CD8-positive, alpha-beta memory T cell (primary cell): ENCODE measurements at regions of chr15 and their contacts with region 1.

Region 1: DNA sequence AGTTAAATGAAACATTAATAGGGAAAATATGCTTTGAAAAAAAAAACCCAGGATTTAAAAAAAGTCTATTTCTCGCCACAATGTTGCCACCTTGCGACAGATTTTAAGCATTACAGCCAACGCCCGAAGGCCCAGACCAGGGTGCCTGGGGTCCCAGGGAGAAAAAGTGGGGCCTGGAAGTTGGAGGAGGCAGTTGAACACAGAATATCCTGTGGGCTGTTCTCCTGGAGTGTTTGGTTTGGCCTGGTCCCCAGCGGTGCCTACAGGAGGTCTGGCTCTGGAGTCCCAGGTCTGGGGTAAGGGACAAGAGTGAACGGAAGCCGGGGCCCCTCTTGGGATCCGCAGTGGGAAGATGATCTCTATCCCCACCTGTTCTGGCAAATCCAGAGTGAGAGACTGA is 3.4 kb downstream of the RNU6-1 start:
- DNase-seq: peak in 4 of 5 donors; percentile 44 to 72 (median 53)
- H3K4me3 ChIP-seq: peak overlapping the region; percentile 54
- H3K4me3 Mint-ChIP-seq: peak overlapping the region; percentile 84 to 93 (median 87)
- H3K27ac ChIP-seq: no peak overlapping the region
- H3K27ac Mint-ChIP-seq: peak overlapping the region in 3 of 8 donors; percentile 29 to 87 (median 38)
- H3K4me1 ChIP-seq: peaks cover 46% of the 10 kb centered on the region
- H3K4me1 Mint-ChIP-seq: peaks cover 49 to 73% (median 56%) of the 10 kb centered on the region in 3 donors
- H3K27me3 ChIP-seq: peaks cover 39% of the 10 kb centered on the region
- H3K27me3 Mint-ChIP-seq: peaks cover 43 to 46% of the 10 kb centered on the region in 2 donors

Region 2: DNA sequence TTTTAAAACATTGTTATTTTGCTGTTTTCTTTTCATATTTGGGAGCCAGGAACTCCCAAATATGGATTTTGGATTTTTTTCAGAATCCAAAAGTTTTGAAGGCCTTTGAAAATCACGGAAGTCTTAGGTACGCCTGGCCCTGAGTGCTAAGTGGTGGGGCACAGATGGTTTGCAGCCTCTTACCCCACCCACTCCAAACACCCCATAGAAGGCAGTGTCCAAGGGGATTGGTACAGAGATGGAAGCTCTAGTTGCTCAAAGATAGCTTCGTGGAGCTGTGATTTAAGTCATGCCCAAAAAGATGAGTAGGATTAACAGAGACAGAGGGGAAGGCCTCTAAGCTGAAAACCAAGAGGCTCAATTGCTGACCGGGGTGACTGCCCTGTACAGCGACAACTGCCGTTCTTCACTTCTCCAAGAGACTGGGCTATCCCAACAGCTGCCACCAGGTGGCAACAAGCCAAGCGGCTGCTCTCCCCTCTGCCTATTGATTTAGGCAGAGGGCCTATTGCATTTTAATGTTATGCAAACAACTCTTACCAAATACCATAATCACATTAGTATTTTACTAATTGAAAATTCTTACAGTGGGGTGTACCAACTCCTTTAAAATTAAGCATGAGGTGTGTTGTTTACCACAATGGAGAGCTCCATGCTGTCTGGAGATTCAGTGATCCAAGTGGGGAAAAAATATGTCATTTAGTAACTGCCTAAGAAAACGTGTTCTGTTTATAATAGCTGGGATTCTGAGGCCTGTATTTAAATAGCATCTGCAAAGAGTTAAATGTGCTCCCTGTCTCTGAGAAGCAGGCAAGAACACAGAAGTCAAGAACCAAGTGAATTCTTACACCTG is 379.6 kb before region 1 on chr15:
- CTCF ChIA-PET with region 1: interaction called, 55 read pairs
- POLR2A ChIA-PET with region 1: interaction called, 3 read pairs
- DNase-seq: peak; percentile 59 to 86 (median 70)
- H3K4me3 ChIP-seq: no peak overlapping the region
- H3K4me3 Mint-ChIP-seq: no peak overlapping the region
- H3K27ac ChIP-seq: no peak overlapping the region
- H3K27ac Mint-ChIP-seq: peak overlapping the region in 1 of 8 donors; percentile 1
- H3K4me1 ChIP-seq: no peaks in the 10 kb centered on the region
- H3K4me1 Mint-ChIP-seq: peaks cover 0 to 3% (median 3%) of the 10 kb centered on the region in 3 donors
- H3K27me3 ChIP-seq: peaks cover 4% of the 10 kb centered on the region
- H3K27me3 Mint-ChIP-seq: peaks cover 0 to 4% of the 10 kb centered on the region in 2 donors

Region 3: GRCh38 chr15:67784090-67784781 is 52.2 kb before region 1 on chr15:
- CTCF ChIA-PET with region 1: interaction called, 41 read pairs
- POLR2A ChIA-PET with region 1: interaction called, 9 read pairs
- DNase-seq: peak in 1 of 5 donors; percentile 29
- H3K4me3 ChIP-seq: no peak overlapping the region
- H3K4me3 Mint-ChIP-seq: peak overlapping the region in 6 of 7 donors; percentile 47 to 90 (median 64)
- H3K27ac ChIP-seq: no peak overlapping the region
- H3K27ac Mint-ChIP-seq: peak overlapping the region; percentile 39 to 93 (median 72)
- H3K4me1 ChIP-seq: peaks cover 22% of the 10 kb centered on the region
- H3K4me1 Mint-ChIP-seq: peaks cover 23 to 31% (median 30%) of the 10 kb centered on the region in 3 donors
- H3K27me3 ChIP-seq: no peaks in the 10 kb centered on the region
- H3K27me3 Mint-ChIP-seq: no peaks in the 10 kb centered on the region